H1 (cell line): ENCODE measurements at regions of chr2 and their contacts with region 1.

Region 1: GRCh38 chr2:26922405-26923188 is 47.8 kb upstream of the MAPRE3 start:
- DNase-seq: no peak
- H3K4me3 ChIP-seq: no peak overlapping the region
- H3K27ac ChIP-seq: no peak overlapping the region
- H3K4me1 ChIP-seq: peaks cover 0 to 8% (median 5%) of the 10 kb centered on the region in 4 experiments; a peak in 5 of 7 replicates
- H3K27me3 ChIP-seq: no peaks in the 10 kb centered on the region
- CTCF ChIP-seq: peak; percentile 82 to 88 (median 87)
- EP300 ChIP-seq: no peak
- POLR2A ChIP-seq: no peak
- RAD21 ChIP-seq: peak; percentile 79 to 84

Region 2: DNA sequence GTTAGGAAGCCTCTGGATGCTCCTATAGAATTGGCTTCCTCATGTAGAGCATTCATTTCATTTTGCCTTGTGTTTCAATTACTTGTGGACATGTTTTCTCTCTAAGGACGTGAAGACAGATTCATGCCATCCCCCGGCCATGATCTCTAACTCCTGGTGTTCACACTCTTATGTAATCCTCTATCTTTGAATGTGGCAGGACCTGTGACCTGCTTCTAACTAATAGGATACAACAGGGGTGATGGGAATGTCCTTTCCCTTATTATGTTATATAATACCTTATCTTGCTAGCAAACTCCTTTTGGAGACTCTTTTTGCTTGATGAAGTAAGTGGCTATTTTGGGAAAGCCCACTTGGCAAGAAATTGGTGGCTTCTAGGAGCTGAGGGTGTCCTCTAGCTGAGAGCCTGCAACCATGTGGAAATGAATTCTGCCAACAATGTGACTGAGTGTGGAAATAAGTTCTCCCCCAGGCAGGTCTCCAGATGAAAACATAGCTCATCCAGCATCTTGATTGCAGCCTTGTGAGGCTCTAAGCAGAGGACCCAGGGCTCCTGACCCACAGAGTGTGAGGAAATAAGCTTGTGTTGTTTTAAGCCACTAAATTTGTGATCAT is 60.9 kb before region 1 on chr2:
- CTCF ChIA-PET with region 1: interaction called, 15 read pairs
- POLR2A ChIA-PET with region 1: no interaction called
- DNase-seq: peak in 1 of 2 experiments; percentile 4
- H3K4me3 ChIP-seq: no peak overlapping the region
- H3K27ac ChIP-seq: no peak overlapping the region
- H3K4me1 ChIP-seq: no peaks in the 10 kb centered on the region
- H3K27me3 ChIP-seq: peaks cover 0 to 2% (median 0%) of the 10 kb centered on the region in 4 experiments; a peak in 1 of 7 replicates
- CTCF ChIP-seq: no peak
- EP300 ChIP-seq: no peak
- POLR2A ChIP-seq: no peak
- RAD21 ChIP-seq: no peak

Region 3: DNA sequence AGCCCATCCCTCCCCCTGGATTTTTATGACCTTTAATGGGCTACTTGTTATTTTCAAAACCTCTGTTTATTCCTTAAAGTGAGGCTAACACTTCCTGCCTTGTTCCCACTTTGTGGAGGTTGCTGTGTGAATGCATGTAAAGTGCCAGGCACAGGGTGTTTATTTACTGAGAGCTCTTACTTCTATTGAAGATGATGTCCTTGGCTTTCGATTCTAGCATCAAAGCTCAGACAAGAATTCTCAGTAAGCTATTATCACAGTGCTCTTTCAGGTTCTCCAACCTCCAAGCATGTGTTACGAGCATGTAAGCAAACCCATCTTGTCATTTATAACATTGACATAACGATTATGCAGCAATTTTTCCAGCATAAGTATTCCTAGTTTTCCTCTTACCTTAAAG is 30.5 kb before region 1 on chr2:
- CTCF ChIA-PET with region 1: interaction called, 13 read pairs
- POLR2A ChIA-PET with region 1: no interaction called
- DNase-seq: no peak
- H3K4me3 ChIP-seq: no peak overlapping the region
- H3K27ac ChIP-seq: no peak overlapping the region
- H3K4me1 ChIP-seq: no peaks in the 10 kb centered on the region; a peak in 1 of 7 replicates
- H3K27me3 ChIP-seq: no peaks in the 10 kb centered on the region
- CTCF ChIP-seq: no peak
- EP300 ChIP-seq: no peak
- POLR2A ChIP-seq: no peak
- RAD21 ChIP-seq: no peak

Region 4: GRCh38 chr2:26911911-26912861 is 10.4 kb before region 1 on chr2:
- CTCF ChIA-PET with region 1: interaction called, 22 read pairs
- POLR2A ChIA-PET with region 1: interaction called, 6 read pairs
- DNase-seq: peak in 1 of 2 experiments; percentile 62
- H3K4me3 ChIP-seq: peak overlapping the region in 2 of 4 experiments; percentile 13 to 48; a peak in 3 of 8 replicates
- H3K27ac ChIP-seq: no peak overlapping the region
- H3K4me1 ChIP-seq: peaks cover 10 to 30% (median 20%) of the 10 kb centered on the region in 4 experiments
- H3K27me3 ChIP-seq: no peaks in the 10 kb centered on the region; a peak in 1 of 7 replicates
- CTCF ChIP-seq: no peak
- EP300 ChIP-seq: no peak
- POLR2A ChIP-seq: no peak
- RAD21 ChIP-seq: no peak

Region 5: GRCh38 chr2:26942543-26943295 is 20.1 kb after region 1 on chr2:
- CTCF ChIA-PET with region 1: interaction called, 54 read pairs
- POLR2A ChIA-PET with region 1: no interaction called
- DNase-seq: peak; percentile 69 to 91
- H3K4me3 ChIP-seq: peak overlapping the region; percentile 37 to 59 (median 40); a peak in 7 of 8 replicates
- H3K27ac ChIP-seq: no peak overlapping the region
- H3K4me1 ChIP-seq: peaks cover 2 to 23% (median 7%) of the 10 kb centered on the region in 4 experiments
- H3K27me3 ChIP-seq: peaks cover 0 to 3% (median 0%) of the 10 kb centered on the region in 4 experiments; a peak in 1 of 7 replicates
- CTCF ChIP-seq: peak; percentile 85 to 90 (median 85)
- EP300 ChIP-seq: no peak
- POLR2A ChIP-seq: no peak
- RAD21 ChIP-seq: peak; percentile 82 to 89